Aorta (tissue), 5 donors: ENCODE measurements at regions of chr11 and their contacts with region 1.

Region 1: DNA sequence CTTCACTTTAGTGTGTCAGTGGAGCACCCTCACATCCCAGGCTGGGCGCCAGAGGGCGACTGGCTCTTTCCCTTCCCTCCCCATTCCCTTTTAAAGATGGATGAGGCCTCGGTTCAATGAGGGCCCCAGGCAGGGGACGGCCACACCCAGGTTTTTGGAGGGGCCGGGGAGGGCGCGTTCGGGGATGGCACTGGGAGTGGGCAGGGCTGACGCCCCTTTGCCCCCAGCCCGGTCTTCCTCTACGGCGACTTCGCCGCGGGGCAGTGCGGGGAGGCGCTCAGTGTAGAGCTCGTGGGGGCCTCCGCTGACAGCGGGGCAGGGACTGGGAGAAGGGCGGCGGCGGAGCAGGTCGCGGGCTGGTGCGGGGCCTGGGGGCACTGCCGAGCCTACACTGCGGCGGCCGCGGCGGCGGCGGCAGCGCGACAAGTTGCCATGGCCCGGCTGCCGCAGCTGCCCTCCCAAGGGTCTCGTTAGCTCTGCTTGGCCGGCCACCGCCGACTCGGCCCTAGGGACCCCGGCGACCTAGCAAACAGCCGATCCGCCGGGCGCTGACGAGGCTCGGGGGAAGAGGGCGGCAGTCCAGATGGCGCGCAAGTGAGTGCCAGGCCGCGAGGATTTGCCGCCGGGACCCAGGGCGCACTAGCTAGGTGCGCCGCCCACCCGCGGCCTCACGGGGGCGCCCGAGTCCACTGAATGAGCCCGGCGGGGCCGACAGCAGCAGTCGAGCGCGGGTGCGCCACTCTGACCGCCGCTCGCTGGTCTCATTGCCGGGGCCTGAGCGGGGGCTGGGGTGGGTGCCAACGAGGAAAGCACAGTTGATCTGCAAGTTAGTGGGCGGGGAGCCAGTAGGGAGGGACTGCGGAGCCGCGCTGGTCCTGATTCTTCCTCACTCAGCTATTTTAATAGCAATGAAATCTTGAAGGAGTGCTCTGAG is 92.7 kb downstream of the RRM1 start:
- DNase-seq: peak; percentile 96 to 98
- ATAC-seq: peak; percentile 96
- H3K4me3 ChIP-seq: peak overlapping the region; percentile 34 to 72
- H3K27ac ChIP-seq: no peak overlapping the region
- H3K4me1 ChIP-seq: no peaks in the 10 kb centered on the region
- H3K27me3 ChIP-seq: no peaks in the 10 kb centered on the region

Region 2: DNA sequence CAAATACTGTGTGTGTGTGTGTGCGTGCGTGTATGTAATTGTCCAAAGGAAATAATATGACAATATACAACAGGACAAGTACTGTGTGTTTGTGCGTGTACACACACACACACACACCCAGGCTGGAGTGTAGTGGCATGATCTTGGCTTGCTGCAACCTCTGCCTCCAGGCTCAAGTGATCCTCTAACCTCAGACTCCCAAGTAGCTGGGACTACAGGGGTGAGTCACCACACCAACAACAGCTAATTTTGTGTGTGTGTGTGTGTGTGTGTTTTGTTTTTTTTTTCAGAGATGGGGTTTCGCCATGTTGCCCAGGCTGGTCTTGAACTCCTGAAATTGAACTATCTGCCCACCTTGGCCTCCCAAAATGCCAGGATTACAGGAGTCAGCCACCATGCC is 451.5 kb before region 1 on chr11:
- intact Hi-C with region 1: no loop called
- DNase-seq: no peak
- ATAC-seq: no peak
- H3K4me3 ChIP-seq: no peak overlapping the region
- H3K27ac ChIP-seq: no peak overlapping the region
- H3K4me1 ChIP-seq: no peaks in the 10 kb centered on the region
- H3K27me3 ChIP-seq: no peaks in the 10 kb centered on the region

Region 3: DNA sequence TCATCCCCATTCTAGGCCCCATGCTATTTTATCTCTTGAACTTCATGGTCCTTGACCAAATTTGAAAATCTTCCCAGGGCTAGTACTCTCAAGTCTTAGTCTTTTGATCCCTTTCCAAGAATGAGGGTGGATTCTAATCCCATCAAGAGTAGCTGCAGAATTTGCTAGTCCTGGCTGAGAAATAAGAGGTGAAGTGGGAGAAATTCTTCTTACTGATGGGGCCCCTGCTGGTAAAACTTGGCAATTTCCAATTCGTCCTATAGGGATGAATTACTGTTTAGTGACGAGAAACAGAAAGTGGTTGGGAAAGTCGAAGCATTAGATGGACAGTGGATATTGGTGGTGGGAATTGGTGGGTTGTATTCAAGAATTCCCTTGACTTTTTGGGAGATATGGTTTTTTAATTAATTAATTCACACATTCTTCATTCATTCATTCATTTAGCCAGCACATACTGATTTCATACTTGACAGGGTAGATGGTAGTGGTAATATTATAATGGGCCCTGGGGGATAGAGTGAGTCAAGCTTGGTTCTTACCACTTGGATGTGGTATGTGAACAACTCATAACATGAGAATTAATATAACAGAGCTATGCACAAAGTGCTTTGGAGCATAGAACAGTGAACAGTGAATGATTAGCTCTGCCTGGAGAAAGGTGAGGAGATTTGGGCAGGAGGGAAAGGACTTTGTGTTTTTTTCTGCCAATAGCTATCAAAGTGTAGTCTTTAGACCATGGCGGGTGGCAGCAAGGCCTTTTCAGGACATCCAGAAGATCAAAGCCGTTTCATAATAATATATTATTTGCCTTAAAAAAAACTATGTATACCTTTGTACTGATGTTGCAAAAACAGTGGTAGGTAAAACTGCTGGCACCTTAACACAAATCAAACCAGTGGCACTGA is 228.1 kb before region 1 on chr11:
- intact Hi-C with region 1: no loop called
- DNase-seq: no peak
- ATAC-seq: no peak
- H3K4me3 ChIP-seq: no peak overlapping the region
- H3K27ac ChIP-seq: no peak overlapping the region
- H3K4me1 ChIP-seq: peaks cover 2 to 6% of the 10 kb centered on the region in 2 donors
- H3K27me3 ChIP-seq: no peaks in the 10 kb centered on the region

Region 4: DNA sequence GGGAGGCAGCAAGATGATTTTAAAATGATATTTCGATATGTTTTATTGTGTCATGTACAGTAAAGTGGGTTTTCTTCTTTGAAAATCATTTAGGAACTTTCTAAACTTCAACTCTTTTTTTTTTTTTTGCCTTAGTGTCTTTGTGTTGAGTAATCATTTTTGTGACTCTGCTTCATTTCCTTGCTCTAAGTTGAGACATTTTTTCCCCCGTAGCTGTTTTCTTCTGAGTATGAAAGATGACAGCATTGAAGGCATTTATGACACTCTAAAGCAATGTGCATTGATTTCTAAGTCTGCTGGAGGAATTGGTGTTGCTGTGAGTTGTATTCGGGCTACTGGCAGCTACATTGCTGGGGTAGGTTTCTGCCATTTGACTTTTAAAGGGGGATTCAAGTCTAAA is 69.2 kb before region 1 on chr11:
- intact Hi-C with region 1: no loop called
- DNase-seq: no peak
- ATAC-seq: no peak
- H3K4me3 ChIP-seq: no peak overlapping the region
- H3K27ac ChIP-seq: no peak overlapping the region
- H3K4me1 ChIP-seq: no peaks in the 10 kb centered on the region
- H3K27me3 ChIP-seq: no peaks in the 10 kb centered on the region

Region 5: GRCh38 chr11:4146070-4146771 is 41.1 kb before region 1 on chr11:
- intact Hi-C with region 1: no loop called
- DNase-seq: no peak
- ATAC-seq: no peak
- H3K4me3 ChIP-seq: no peak overlapping the region
- H3K27ac ChIP-seq: no peak overlapping the region
- H3K4me1 ChIP-seq: no peaks in the 10 kb centered on the region
- H3K27me3 ChIP-seq: no peaks in the 10 kb centered on the region

Region 6: GRCh38 chr11:4393209-4393857 is 206.0 kb after region 1 on chr11 and contains the start of gene TRIM21:
- intact Hi-C with region 1: loop called in 1 of 2 experiments (anchors 5 kb)
- DNase-seq: peak; percentile 90 to 92
- ATAC-seq: peak; percentile 99
- H3K4me3 ChIP-seq: peak within 1 kb of the TSS; percentile 75 to 95
- H3K27ac ChIP-seq: peak within 1 kb of the TSS in 1 of 2 donors; percentile 29
- H3K4me1 ChIP-seq: no peaks in the 10 kb centered on the region
- H3K27me3 ChIP-seq: no peaks in the 10 kb centered on the region
- total RNA-seq, gene TRIM21: 15.8 to 20.7 TPM

Region 7: GRCh38 chr11:4496557-4497275 is 309.4 kb after region 1 on chr11:
- intact Hi-C with region 1: loop called (anchors 2 kb)
- DNase-seq: no peak
- ATAC-seq: no peak
- H3K4me3 ChIP-seq: no peak overlapping the region
- H3K27ac ChIP-seq: no peak overlapping the region
- H3K4me1 ChIP-seq: no peaks in the 10 kb centered on the region
- H3K27me3 ChIP-seq: peaks cover 0 to 1% of the 10 kb centered on the region in 2 donors

Region 8: GRCh38 chr11:4607781-4608666 is 420.7 kb after region 1 on chr11 and contains the start of gene TRIM68:
- intact Hi-C with region 1: loop called in 1 of 2 experiments (anchors 10 kb)
- DNase-seq: peak; percentile 98 to 99
- ATAC-seq: peak; percentile 100
- H3K4me3 ChIP-seq: peak within 1 kb of the TSS; percentile 82 to 86
- H3K27ac ChIP-seq: peak within 1 kb of the TSS; percentile 8 to 85
- H3K4me1 ChIP-seq: peaks cover 0 to 2% of the 10 kb centered on the region in 2 donors
- H3K27me3 ChIP-seq: no peaks in the 10 kb centered on the region
- total RNA-seq, gene TRIM68: 7.9 to 14.5 TPM